ENCODE measurements at regions of chr5 and their contacts with region 1.

Region 1: DNA sequence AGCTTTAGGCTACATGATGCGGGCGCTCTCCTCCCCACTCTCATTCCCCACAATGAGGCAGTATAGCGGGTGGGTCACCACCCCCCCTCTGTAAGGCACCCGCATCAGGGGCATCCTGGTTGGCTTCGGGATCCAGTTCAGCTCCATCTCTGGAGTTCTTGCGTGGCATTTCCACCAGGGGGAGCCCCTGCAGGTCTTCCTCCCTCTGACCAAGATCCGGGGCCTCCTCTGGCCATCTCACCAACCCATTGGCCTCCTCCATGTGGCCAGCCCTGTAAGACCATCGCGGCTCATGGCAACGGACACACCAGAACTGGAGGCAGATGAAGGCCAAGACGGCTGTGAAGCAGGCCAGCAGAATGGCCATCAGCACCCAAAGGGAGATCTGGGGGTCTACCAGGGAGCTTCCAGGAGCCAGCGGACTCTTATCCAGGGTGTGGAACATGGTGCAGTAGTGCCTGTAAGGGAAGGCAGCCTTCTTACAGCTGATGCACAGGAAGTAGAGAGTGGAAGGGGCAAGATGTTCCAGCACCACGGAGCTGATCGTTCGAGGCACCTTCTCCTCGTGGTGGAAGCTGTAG is 77.0 kb downstream of the CYFIP2 start:
- DNase-seq: peak in 2 of 3 donors; percentile 20 to 23
- H3K4me3 ChIP-seq: no peak overlapping the region
- H3K27ac ChIP-seq: no peak overlapping the region
- H3K4me1 ChIP-seq: no peaks in the 10 kb centered on the region
- H3K27me3 ChIP-seq: no peaks in the 10 kb centered on the region

Region 2: DNA sequence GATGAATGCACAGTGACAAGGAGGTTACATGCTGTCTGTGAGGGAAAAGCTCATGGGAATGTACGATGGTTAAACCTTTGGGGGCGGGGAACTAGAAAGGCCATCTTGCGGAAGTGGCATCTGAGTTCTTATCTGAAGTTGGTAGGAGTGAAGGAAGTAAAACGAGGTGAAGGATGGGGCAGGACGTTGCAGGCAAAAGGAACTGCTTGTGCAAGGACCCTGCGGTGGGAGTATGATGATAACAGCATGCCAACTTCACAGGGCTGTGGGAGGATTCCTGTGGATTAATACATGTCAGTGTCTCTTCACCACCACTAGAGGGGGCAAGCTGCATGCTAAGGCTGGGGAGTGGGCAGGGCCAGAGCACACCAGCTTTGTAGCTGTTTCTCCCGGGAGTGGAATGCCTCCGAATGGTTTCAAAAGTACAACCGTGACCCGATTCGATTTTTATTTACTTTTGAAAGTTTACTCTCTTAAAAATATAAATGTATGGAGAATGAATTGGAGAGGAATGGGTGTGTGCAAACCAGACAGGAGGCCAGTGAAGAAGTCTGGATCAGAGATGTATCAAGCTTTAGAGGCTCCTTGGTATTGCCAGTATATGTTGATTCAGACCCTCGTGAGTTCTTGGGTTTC is 14.5 kb before region 1 on chr5:
- CTCF ChIA-PET with region 1: interaction called, 31 read pairs
- POLR2A ChIA-PET with region 1: interaction called, 3 read pairs
- DNase-seq: peak; percentile 80 to 85 (median 81)
- H3K4me3 ChIP-seq: peak overlapping the region in 1 of 7 experiments; percentile 21
- H3K27ac ChIP-seq: no peak overlapping the region
- H3K4me1 ChIP-seq: peaks cover 0 to 3% (median 0%) of the 10 kb centered on the region in 4 experiments
- H3K27me3 ChIP-seq: no peaks in the 10 kb centered on the region

Region 3: GRCh38 chr5:157354800-157355199 is 11.9 kb after region 1 on chr5:
- CTCF ChIA-PET with region 1: interaction called, 61 read pairs
- POLR2A ChIA-PET with region 1: no interaction called
- DNase-seq: no peak
- H3K4me3 ChIP-seq: no peak overlapping the region
- H3K27ac ChIP-seq: no peak overlapping the region
- H3K4me1 ChIP-seq: peaks cover 0 to under 1% (median 0%) of the 10 kb centered on the region in 4 experiments
- H3K27me3 ChIP-seq: no peaks in the 10 kb centered on the region

Region 4: DNA sequence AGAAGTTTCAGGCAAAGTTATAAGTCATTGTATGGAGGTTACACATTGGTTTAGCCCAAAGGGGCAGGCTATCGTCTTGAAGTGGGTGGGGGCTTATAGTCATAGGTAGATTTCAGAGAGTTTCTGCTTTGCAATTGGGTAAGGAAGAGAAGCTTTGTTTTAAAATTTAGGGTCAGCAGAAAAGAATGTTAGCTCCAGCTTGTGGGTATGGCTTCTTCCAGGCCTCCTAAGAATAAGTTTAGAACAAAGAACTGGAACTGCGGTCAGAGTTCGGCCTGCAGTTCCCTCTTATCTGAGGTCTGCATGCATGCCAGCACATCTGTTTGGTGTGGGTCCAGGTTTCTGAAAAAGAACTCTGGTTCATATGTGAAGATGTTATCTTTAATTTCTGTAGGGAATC is 19.1 kb after region 1 on chr5:
- CTCF ChIA-PET with region 1: interaction called, 61 read pairs
- POLR2A ChIA-PET with region 1: no interaction called
- DNase-seq: peak; percentile 78 to 96 (median 92)
- H3K4me3 ChIP-seq: no peak overlapping the region
- H3K27ac ChIP-seq: peak overlapping the region in 1 of 2 experiments; percentile 60
- H3K4me1 ChIP-seq: peaks cover 4 to 27% (median 14%) of the 10 kb centered on the region in 4 experiments
- H3K27me3 ChIP-seq: no peaks in the 10 kb centered on the region

Region 5: DNA sequence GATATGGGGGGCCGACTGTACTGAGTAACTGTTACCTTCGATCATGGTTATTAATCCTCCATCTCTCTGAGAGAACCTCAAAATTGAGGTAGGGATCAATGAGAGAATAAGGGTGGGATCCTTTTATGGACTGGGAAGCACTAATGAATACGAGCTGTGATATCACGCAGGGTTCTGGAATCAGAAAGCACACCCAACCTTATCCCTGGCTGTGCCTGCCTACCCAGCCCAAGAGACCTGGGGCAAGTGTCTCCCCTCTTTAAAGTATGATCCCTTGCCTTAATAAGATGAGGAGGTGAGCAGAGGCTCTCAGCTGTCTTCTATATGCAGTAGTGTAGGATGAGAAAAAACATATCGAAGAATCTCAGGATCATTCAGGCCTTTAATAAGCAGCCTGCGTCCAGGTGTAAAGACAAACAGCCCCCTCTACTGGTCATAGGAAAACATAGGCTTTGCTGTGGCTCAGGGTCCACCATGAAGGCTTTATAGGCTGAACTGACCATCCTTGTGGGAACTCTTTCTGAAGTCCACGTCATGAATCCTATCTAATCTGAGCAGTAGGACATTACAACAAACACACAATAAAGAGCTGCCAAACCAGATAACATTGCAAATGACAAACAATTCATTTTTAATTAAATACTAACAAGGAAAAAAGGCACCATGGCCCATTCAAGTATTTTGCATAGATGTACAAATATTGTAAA is 133.9 kb after region 1 on chr5:
- CTCF ChIA-PET with region 1: interaction called, 68 read pairs
- POLR2A ChIA-PET with region 1: no interaction called
- DNase-seq: peak; percentile 48 to 72 (median 72)
- H3K4me3 ChIP-seq: no peak overlapping the region
- H3K27ac ChIP-seq: no peak overlapping the region
- H3K4me1 ChIP-seq: peaks cover 0 to 5% (median 0%) of the 10 kb centered on the region in 4 experiments
- H3K27me3 ChIP-seq: no peaks in the 10 kb centered on the region

Region 6: DNA sequence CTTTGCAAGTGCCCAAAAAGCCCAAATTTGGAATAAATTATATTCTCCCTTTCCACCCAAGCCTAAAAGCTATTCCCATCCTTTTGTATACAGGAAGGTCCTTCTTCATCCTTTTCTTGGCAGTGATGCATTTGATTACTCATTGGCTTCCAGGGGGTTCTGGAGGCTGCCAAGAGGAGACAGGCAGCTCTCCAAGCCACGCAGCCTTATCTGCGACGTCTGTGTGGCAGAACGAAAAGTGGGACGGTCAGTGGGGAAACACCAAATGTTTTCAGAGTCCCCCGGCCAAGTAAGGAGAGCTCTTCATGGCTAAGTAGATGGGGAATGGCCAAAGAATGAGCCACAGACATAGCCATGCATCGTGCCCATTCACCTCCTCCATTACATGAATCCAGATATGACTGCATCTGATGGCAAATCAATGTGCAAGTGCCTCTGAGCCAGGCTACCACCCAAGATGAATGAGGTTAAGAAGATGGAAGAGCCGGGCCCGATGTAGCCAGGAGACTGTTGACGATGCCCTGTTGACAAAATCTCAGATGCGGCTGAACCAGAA is 220.5 kb after region 1 on chr5:
- CTCF ChIA-PET with region 1: no interaction called
- POLR2A ChIA-PET with region 1: no interaction called
- DNase-seq: no peak
- H3K4me3 ChIP-seq: peak overlapping the region in 2 of 7 experiments; percentile 22 to 55
- H3K27ac ChIP-seq: no peak overlapping the region
- H3K4me1 ChIP-seq: peaks cover 9 to 13% (median 11%) of the 10 kb centered on the region in 4 experiments
- H3K27me3 ChIP-seq: no peaks in the 10 kb centered on the region

Region 7: GRCh38 chr5:157718519-157718918 is 375.6 kb after region 1 on chr5:
- CTCF ChIA-PET with region 1: interaction called, 21 read pairs
- POLR2A ChIA-PET with region 1: no interaction called
- DNase-seq: peak; percentile 46 to 64 (median 61)
- H3K4me3 ChIP-seq: no peak overlapping the region
- H3K27ac ChIP-seq: no peak overlapping the region
- H3K4me1 ChIP-seq: peaks cover 0 to 9% (median 8%) of the 10 kb centered on the region in 4 experiments
- H3K27me3 ChIP-seq: no peaks in the 10 kb centered on the region

Measured in common myeloid progenitor, CD34-positive (primary cell).